Natural killer cell (primary cell): ENCODE measurements at regions of chr7 and their contacts with region 1.

Region 1: DNA sequence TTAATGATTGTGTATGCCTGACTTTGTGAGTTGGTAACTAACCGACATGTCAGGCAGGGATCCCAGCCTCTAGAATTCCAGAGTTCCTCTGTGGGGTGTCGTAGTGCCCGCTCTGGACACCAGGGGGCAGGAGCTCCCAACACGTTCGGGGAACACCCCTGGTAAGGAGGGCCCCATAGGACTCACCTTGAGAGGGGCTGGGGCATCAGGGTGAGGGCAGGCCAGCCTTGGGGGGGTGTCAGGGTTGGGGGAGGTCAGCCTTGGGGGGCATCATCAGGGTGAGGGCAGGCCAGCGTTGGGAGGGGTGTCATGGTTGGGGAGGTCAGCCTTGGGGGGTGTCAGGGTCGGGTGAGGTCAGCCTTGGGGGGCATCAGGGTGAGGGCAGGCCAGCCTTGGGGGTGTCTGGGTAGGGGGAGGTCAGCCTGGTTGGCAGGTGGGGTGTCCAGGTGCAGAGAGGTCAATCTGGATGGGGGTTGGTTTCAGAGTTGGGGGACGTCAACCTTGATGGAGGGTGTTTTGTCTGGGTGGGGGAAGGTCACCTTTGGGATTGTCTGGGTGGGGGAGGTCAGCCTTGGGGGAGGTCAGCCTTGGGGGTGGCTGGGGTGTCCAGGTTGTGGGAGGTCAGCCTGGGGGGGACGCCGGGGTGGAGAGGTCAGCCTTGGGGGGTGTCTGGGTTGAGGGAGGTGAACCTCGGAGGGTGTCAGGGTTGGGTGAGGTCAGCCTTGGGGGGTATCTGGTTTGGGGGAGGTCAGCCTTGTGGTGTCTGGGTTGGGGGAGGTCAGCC is 45.6 kb upstream of the SUN1 start:
- DNase-seq: peak; percentile 48 to 83
- ATAC-seq: peak; percentile 56 to 92 (median 90)
- H3K4me3 ChIP-seq: no peak overlapping the region
- H3K4me3 Mint-ChIP-seq: no peak overlapping the region
- H3K27ac ChIP-seq: no peak overlapping the region
- H3K27ac Mint-ChIP-seq: no peak overlapping the region
- H3K4me1 ChIP-seq: no peaks in the 10 kb centered on the region
- H3K4me1 Mint-ChIP-seq: no peaks in the 10 kb centered on the region
- H3K27me3 ChIP-seq: no peaks in the 10 kb centered on the region
- H3K27me3 Mint-ChIP-seq: no peaks in the 10 kb centered on the region
- CTCF ChIP-seq: peak; percentile 65

Region 2: DNA sequence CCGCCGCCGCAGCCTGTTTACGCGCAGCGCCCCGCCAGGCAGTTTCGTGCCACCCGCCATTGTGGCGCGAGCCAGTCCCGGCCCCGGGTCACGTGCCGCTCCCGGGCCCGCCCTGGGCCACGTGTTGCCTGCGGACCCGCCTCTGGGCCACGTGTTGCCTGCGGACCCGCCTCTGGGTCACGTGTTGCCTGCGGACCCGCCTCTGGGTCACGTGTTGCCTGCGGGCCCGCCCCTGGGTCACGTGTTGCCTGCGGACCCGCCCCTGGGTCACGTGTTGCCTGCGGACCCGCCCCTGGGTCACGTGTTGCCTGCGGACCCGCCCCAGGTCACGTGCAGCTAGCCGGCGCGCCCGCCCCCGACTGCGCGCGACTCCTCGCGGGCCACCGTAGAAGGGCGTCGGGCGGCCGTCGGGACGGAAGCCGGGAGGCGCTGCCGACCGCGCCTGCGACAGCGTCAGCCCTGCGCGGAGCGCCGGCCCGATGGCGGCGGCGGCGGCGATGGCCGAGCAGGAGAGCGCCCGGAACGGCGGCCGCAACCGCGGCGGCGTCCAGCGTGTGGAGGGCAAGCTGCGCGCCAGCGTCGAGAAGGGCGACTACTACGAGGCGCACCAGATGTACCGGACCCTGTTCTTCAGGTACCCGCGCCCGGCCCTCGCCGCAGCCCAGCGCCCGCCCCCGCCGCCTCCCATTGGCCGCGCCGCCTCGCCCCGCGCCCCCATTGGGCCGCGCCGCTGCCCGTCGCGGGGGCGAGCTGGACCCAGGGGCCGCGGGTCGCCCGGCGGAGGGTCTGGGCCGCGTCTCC is 89.7 kb after region 1 on chr7 and contains the start of gene GET4:
- intact Hi-C with region 1: loop called (anchors 1 kb)
- DNase-seq: peak; percentile 97 to 98
- ATAC-seq: peak; percentile 80 to 93 (median 82)
- H3K4me3 ChIP-seq: peak within 1 kb of the TSS; percentile 87
- H3K4me3 Mint-ChIP-seq: peak within 1 kb of the TSS; percentile 99
- H3K27ac ChIP-seq: peak within 1 kb of the TSS; percentile 90
- H3K27ac Mint-ChIP-seq: peak within 1 kb of the TSS; percentile 89 to 94
- H3K4me1 ChIP-seq: peaks cover 32% of the 10 kb centered on the region
- H3K4me1 Mint-ChIP-seq: peaks cover 19 to 23% of the 10 kb centered on the region in 2 donors
- H3K27me3 ChIP-seq: no peaks in the 10 kb centered on the region
- H3K27me3 Mint-ChIP-seq: no peaks in the 10 kb centered on the region
- CTCF ChIP-seq: no peak
- total RNA-seq, gene GET4: 69.3 to 81.6 (median 73.2) TPM